A549 (cell line): ENCODE measurements at regions of chr19 and their contacts with region 1.

Region 1: DNA sequence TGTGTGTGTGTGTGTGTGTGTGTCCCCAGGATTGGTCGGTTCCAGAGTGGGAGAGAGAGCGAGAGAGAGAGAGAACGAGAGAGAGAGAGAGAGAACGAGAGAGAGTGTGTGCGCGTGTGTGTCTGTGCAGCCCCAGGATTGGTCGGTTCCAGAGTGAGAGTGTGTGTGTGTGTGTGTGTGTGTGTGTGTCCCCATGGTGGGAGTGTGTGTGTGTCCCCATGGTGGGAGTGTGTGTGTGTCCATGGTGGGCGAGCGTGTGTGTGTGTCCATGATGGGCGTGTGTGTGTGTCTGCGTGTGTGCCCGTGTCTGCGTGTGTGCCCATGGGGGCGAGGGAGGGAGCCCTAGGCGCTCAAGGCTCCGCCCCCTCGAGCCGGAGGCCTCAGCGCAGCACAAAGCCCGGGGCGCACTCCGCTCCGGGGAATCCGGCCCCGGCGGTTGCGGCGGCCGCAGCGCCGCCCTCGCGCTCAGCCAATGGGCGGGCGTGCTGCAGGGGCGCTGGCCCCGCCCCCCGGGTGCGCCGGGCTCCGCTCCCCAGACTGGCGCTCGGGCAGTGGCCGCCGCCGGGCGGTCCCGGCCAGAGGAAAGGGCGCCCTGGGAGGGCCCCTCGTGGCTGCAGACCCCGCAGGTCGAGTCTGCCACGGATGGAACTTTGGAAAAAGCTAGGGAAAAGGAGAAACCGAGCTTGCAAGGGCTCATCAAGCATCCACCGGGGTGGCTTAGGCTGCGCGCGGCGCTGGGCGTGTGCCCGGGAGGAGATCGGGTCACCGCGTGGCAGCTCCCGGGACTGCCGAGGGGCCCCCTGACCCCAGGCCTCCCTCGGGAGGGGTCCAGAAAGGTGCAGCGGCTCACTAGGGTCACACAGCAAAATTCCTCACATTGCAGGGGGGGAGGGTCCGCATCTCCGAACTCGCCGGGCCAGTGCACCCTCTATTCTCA is 96.2 kb downstream of the INSR start:
- DNase-seq: peak; percentile 72 to 91
- ATAC-seq: peak; percentile 88 to 89
- H3K4me3 ChIP-seq: peak overlapping the region; percentile 68
- H3K27ac ChIP-seq: peak overlapping the region; percentile 85 to 86
- H3K4me1 ChIP-seq: peaks cover 27% of the 10 kb centered on the region
- CTCF ChIP-seq: no peak
- EP300 ChIP-seq: no peak
- POLR2A ChIP-seq: peak; percentile 69
- RAD21 ChIP-seq: no peak; a peak in 1 of 5 replicates

Region 2: GRCh38 chr19:7265963-7266362 is 67.9 kb after region 1 on chr19:
- CTCF ChIA-PET with region 1: no interaction called
- POLR2A ChIA-PET with region 1: interaction called, 10 read pairs
- DNase-seq: no peak
- ATAC-seq: no peak
- H3K4me3 ChIP-seq: no peak overlapping the region
- H3K27ac ChIP-seq: no peak overlapping the region
- H3K4me1 ChIP-seq: no peaks in the 10 kb centered on the region
- CTCF ChIP-seq: no peak
- EP300 ChIP-seq: no peak
- POLR2A ChIP-seq: no peak
- RAD21 ChIP-seq: no peak

Region 3: GRCh38 chr19:7293795-7294570 is 96.0 kb after region 1 on chr19 and contains the start of gene INSR:
- CTCF ChIA-PET with region 1: no interaction called
- POLR2A ChIA-PET with region 1: interaction called, 11 read pairs
- DNase-seq: peak; percentile 81 to 85
- ATAC-seq: peak; percentile 93 to 95
- H3K4me3 ChIP-seq: peak within 1 kb of the TSS; percentile 90
- H3K27ac ChIP-seq: peak within 1 kb of the TSS; percentile 82 to 93
- H3K4me1 ChIP-seq: peaks cover 6% of the 10 kb centered on the region; the same call in 1 of the 3 replicates
- CTCF ChIP-seq: no peak
- EP300 ChIP-seq: no peak
- POLR2A ChIP-seq: peak; percentile 26
- RAD21 ChIP-seq: no peak; a peak in 1 of 5 replicates
- polyA plus RNA-seq, gene INSR: 3.3 and 4.4 TPM in 2 replicates

Region 4: DNA sequence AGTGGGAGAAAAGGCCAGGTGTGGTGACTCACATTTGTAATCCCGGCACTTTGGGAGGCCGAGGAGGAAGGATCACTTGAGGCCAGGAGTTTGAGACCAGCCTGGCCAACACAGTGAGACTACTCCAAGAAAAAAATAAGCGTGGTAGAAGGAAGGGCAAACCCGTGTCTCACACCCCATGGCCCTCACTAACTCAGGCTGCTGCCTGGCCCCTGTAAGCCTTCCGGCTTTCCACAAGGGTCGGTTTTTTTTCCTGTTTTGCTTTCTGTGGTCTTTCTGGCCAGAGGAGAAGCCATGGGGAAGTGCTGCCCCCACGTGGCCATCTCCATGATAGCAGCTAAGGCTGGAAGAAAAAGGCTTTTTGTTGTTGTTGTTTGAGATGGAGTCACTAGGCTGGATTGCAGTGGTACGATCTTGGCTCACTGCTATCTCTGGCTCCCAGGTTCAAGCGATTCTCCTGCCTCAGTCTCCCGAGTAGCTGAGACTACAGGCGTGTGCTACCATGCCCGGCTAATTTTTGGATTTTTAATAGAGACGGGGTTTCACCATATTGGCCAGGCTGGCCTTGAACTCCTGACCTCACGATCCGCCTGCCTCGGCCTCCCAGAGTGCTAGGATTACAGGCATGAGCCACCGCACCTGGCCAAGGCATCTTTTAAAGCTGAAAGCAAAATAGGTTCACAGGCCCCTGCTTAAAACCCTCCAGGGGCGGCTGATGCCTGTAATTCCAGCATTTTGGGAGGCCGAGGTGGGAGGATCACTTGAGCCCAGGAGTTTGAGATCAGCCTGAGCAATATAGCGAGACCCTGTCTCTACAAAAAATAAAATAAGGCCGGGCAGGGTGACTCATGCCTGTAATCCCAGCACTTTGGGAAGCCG is 143.2 kb after region 1 on chr19:
- CTCF ChIA-PET with region 1: no interaction called
- POLR2A ChIA-PET with region 1: no interaction called
- DNase-seq: peak; percentile 29 to 69
- ATAC-seq: peak; percentile 47 to 71; a peak in 4 of 6 replicates
- H3K4me3 ChIP-seq: no peak overlapping the region
- H3K27ac ChIP-seq: no peak overlapping the region
- H3K4me1 ChIP-seq: no peaks in the 10 kb centered on the region
- CTCF ChIP-seq: peak; percentile 85
- EP300 ChIP-seq: no peak
- POLR2A ChIP-seq: no peak
- RAD21 ChIP-seq: peak; percentile 89 to 93